Head of caudate nucleus (tissue), 42 donors: ENCODE measurements at regions of chr6 and their contacts with region 1.

Region 1: GRCh38 chr6:17156112-17156921 is 54.5 kb downstream of the STMND1 start:
- DNase-seq: peak in 41 of 42 donors; percentile 28 to 93 (median 79)

Region 2: DNA sequence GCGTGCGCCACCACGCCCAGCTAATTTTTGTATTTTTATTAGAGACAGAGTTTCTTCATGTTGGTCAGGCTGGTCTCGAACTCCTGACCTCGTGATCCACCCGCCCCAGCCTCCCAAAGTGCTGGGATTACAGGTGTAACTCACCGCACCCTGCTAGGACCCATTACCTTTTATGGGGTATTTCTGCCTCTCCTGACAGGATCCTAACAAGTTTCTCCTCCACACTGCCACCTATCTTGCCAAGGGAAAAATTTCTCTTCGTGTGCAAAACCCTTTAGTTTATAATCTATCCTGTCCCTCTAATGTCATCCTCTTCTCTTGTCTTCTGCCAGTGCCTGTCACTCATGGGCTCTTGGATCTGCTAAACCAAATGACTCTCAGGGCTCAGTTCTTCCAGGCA is 52.6 kb before region 1 on chr6:
- intact Hi-C with region 1: no loop called
- DNase-seq: no peak

Region 3: DNA sequence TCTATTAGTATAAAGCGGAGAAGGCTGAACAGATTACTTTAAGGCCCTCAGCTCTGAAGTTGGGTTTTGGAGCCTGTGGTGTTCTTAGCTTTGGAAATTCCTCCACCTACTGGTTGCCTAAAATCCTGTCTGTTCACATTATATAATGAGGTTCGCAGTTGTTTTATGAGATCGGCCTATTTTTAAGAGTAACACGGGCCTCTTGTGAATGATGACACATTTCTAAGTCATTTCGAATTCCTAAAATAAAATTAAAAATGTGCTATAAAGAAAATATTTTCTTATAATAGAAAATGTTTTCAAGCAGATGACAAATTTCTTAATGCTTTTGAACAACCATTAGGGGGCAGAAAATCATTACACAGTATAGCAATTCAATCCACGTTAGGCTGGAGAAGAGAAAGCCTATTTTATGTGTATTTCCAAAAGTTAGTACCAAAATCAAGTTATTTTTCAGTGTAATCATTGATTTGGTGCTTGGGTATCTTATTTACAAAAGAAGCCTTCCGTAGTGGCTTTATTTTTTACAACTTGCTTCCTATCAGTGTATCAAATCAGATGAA is 428.0 kb after region 1 on chr6:
- intact Hi-C with region 1: loop called (anchors 2 kb)
- DNase-seq: peak in 25 of 42 donors; percentile 15 to 82 (median 48)